Ascending aorta (tissue), 2 donors: ENCODE measurements at regions of chr12 and their contacts with region 1.

Region 1: DNA sequence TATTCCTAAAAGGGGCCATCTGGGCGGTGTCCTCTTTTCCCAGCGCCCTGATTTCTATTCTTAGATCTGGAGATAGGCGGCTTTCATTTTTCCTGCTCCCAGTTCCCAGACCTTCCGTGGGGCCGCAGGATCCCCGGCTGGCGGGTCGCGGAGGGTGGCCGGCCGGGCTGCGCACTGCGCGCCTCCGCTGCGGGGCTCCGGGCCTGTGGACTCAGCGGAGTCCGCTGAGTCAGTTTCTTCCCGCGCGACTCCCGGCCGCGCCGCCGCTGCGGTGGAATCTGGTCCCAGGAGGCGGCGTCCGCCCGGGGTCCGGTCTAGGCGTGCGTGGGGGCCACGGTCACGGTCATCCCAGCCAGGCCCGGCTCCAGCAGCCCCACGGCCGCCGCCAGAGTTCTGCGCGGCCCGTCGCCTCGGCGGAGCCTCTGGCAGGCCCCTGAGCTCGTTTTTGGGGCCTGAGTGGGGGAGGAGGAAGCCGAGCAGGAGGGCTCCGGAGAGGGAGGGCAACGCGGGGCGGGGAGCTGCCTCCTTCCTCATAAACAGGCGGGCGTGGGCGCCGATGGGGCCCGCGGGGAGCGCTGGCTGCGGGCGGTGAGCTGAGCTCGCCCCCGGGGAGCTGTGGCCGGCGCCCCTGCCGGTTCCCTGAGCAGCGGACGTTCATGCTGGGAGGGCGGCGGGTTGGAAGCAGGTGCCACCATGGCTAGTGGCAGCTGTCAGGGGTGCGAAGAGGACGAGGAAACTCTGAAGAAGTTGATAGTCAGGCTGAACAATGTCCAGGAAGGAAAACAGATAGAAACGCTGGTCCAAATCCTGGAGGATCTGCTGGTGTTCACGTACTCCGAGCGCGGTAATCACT is at the start of gene LRRK2:
- DNase-seq: peak; percentile 49 to 92
- H3K4me3 ChIP-seq: peak within 1 kb of the TSS; percentile 69 to 82
- H3K27ac ChIP-seq: peak within 1 kb of the TSS; percentile 90 to 94
- H3K4me1 ChIP-seq: peaks cover 2 to 6% of the 10 kb centered on the region in 2 donors
- H3K27me3 ChIP-seq: no peaks in the 10 kb centered on the region
- CTCF ChIP-seq: peak in 1 of 3 experiments; percentile 15
- total RNA-seq, gene LRRK2: 14.3 TPM

Region 2: GRCh38 chr12:38906482-38907170 is 1318.0 kb before region 1 on chr12:
- intact Hi-C with region 1: loop called (anchors 5 kb)
- DNase-seq: peak; percentile 19 to 93
- H3K4me3 ChIP-seq: peak overlapping the region; percentile 55 to 94
- H3K27ac ChIP-seq: peak overlapping the region; percentile 98 to 99
- H3K4me1 ChIP-seq: peaks cover 4 to 7% of the 10 kb centered on the region in 2 donors
- H3K27me3 ChIP-seq: no peaks in the 10 kb centered on the region
- CTCF ChIP-seq: peak; percentile 74 to 93 (median 90)

Region 3: DNA sequence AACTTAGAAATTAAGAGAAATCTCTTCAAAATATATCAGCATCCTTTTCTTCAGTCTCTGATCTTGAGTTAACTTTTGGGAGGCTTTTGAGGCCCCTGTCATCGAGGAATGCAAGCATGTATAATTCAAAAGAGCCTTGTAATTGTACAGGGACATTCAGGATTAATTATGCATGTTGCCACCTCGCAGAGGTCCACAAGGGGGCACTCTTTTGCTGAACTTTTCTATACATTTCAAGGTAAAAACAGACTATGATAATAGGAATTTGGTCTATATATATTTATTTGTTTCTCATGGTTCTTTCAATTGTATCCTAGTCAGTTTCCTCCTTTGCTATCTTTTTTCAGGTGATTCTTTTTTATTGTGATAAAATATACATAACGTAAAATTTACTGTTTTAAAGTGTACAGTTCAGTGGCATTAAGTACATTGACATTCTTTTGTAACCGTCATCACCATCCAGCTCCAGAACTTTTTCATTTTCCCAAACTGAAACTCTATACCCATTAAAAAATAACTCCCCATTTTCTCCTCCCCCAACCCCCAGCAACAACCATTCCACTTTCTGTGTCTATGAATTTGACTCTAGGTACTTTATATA is 71.8 kb before region 1 on chr12:
- intact Hi-C with region 1: loop called (anchors 5 kb)
- DNase-seq: peak in 1 of 2 donors; percentile 73
- H3K4me3 ChIP-seq: no peak overlapping the region
- H3K27ac ChIP-seq: no peak overlapping the region
- H3K4me1 ChIP-seq: no peaks in the 10 kb centered on the region
- H3K27me3 ChIP-seq: no peaks in the 10 kb centered on the region
- CTCF ChIP-seq: peak; percentile 37 to 81 (median 73)

Region 4: GRCh38 chr12:40336573-40337199 is 112.0 kb after region 1 on chr12:
- intact Hi-C with region 1: no loop called
- DNase-seq: no peak
- H3K4me3 ChIP-seq: no peak overlapping the region
- H3K27ac ChIP-seq: no peak overlapping the region
- H3K4me1 ChIP-seq: no peaks in the 10 kb centered on the region
- H3K27me3 ChIP-seq: no peaks in the 10 kb centered on the region
- CTCF ChIP-seq: peak in 1 of 3 experiments; percentile 46

Region 5: GRCh38 chr12:40587421-40587820 is 362.8 kb after region 1 on chr12:
- intact Hi-C with region 1: no loop called
- DNase-seq: no peak
- H3K4me3 ChIP-seq: no peak overlapping the region
- H3K27ac ChIP-seq: no peak overlapping the region
- H3K4me1 ChIP-seq: no peaks in the 10 kb centered on the region
- H3K27me3 ChIP-seq: no peaks in the 10 kb centered on the region
- CTCF ChIP-seq: no peak